Ascending aorta (tissue), 2 donors: ENCODE measurements at regions of chr1 and their contacts with region 1.

Region 1: GRCh38 chr1:115426231-115426771 is 88.3 kb upstream of the NGF start:
- DNase-seq: peak; percentile 38 to 91
- H3K4me3 ChIP-seq: no peak overlapping the region
- H3K27ac ChIP-seq: peak overlapping the region; percentile 77 to 79
- H3K4me1 ChIP-seq: peaks cover 0 to 13% of the 10 kb centered on the region in 2 donors
- H3K27me3 ChIP-seq: no peaks in the 10 kb centered on the region
- CTCF ChIP-seq: no peak

Region 2: GRCh38 chr1:115068826-115069572 is 357.3 kb before region 1 on chr1:
- intact Hi-C with region 1: loop called (anchors 5 kb)
- DNase-seq: peak; percentile 46 to 83
- H3K4me3 ChIP-seq: no peak overlapping the region
- H3K27ac ChIP-seq: peak overlapping the region; percentile 84 to 86
- H3K4me1 ChIP-seq: peaks cover 12 to 50% of the 10 kb centered on the region in 2 donors
- H3K27me3 ChIP-seq: no peaks in the 10 kb centered on the region
- CTCF ChIP-seq: peak in 1 of 3 experiments; percentile 23

Region 3: DNA sequence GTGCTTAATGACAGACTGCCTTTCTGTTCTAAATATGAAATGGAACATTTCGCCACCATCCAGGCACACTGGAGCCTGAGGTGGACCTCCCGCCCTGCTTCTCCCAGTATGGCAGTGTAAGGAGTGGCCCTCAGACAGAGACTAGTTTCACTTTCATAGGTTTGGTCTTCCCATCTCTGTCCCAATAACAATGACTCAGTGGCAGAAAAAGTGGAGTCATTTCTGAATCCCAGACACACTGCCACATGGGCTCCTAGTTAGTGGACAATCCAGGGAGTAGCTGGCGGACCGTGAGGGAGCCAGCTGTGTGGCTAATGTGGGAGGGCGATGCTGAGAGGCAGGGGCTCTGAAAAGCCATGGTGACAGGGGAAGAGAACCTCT is 241.4 kb before region 1 on chr1:
- intact Hi-C with region 1: loop called (anchors 5 kb)
- DNase-seq: peak; percentile 58 to 89
- H3K4me3 ChIP-seq: peak overlapping the region; percentile 12 to 50
- H3K27ac ChIP-seq: peak overlapping the region; percentile 89 to 95
- H3K4me1 ChIP-seq: peaks cover 16 to 39% of the 10 kb centered on the region in 2 donors
- H3K27me3 ChIP-seq: no peaks in the 10 kb centered on the region
- CTCF ChIP-seq: no peak

Region 4: GRCh38 chr1:115289940-115290339 is 136.4 kb before region 1 on chr1:
- intact Hi-C with region 1: loop called (anchors 5 kb)
- DNase-seq: no peak
- H3K4me3 ChIP-seq: no peak overlapping the region
- H3K27ac ChIP-seq: peak overlapping the region in 1 of 2 donors; percentile 13
- H3K4me1 ChIP-seq: peaks cover 4 to 11% of the 10 kb centered on the region in 2 donors
- H3K27me3 ChIP-seq: no peaks in the 10 kb centered on the region
- CTCF ChIP-seq: no peak